ENCODE measurements at regions of chr17 and their contacts with region 1.

Region 1: DNA sequence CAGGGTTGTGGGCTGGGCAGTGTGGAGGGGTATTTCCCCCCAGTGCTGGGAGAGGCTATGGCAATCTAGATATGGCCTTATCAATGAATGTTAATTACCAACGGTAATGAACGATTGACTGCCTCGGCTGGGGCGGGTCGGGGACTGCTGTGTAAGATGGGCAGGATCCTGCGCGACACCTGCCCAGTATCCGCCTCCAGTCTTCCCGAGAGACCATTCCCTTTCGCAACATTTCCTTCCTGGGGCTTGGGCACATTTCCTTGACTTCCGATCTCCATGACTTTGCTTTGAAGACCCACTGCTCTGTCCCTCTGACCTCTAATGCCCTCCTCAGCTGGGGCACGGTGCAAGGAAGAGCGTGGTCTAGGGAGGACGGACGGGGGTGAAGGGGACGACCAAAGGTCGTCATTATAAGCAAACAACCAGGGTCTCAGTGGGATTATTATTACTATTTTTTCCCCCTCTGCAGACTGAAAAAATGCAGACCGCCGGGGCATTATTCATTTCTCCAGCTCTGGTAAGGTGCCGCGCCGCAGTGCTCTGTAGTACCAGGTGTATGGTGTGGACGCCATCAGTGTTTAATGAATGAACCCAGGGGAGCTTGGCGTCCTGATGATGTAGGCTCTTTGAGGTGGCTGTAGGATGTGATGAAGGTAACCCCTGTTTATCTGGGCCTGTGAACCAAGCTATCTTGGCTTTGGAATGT is 506 bp downstream of the ATP5MC1 start:
- DNase-seq: no peak
- ATAC-seq: peak; percentile 12
- H3K4me3 ChIP-seq: peak overlapping the region; percentile 76 to 97 (median 81)
- H3K27ac ChIP-seq: peak overlapping the region; percentile 84
- H3K4me1 ChIP-seq: peaks cover 52% of the 10 kb centered on the region
- H3K27me3 ChIP-seq: no peaks in the 10 kb centered on the region; a peak in 1 of 5 replicates
- CTCF ChIP-seq: 0 out of 2 replicates have a peak, but pooled peaks have one; percentile 2
- EP300 ChIP-seq: no peak
- POLR2A ChIP-seq: peak in 1 of 2 experiments; percentile 0; a peak in 1 of 4 replicates
- RAD21 ChIP-seq: peak; percentile 69

Region 2: GRCh38 chr17:48871551-48872351 is 21.3 kb before region 1 on chr17:
- CTCF ChIA-PET with region 1: no interaction called
- POLR2A ChIA-PET with region 1: interaction called, 34 read pairs
- in situ Hi-C with region 1: no loop called
- intact Hi-C with region 1: no loop called
- DNase-seq: peak; percentile 99
- ATAC-seq: peak; percentile 96
- H3K4me3 ChIP-seq: peak overlapping the region; percentile 17 to 60 (median 25); a peak in 4 of 6 replicates
- H3K27ac ChIP-seq: peak overlapping the region; percentile 97
- H3K4me1 ChIP-seq: peaks cover 64% of the 10 kb centered on the region
- H3K27me3 ChIP-seq: no peaks in the 10 kb centered on the region
- CTCF ChIP-seq: peak; percentile 45; the same call in 1 of the 2 replicates
- EP300 ChIP-seq: peak; percentile 98
- POLR2A ChIP-seq: peak; percentile 56 to 74
- RAD21 ChIP-seq: peak; percentile 45; the same call in 1 of the 2 replicates

Region 3: GRCh38 chr17:48908047-48908843 is 15.2 kb after region 1 on chr17 and contains the start of gene UBE2Z:
- CTCF ChIA-PET with region 1: no interaction called
- POLR2A ChIA-PET with region 1: interaction called, 194 read pairs
- in situ Hi-C with region 1: no loop called
- intact Hi-C with region 1: loop called (anchors 1 kb)
- DNase-seq: peak; percentile 95
- ATAC-seq: peak; percentile 92
- H3K4me3 ChIP-seq: peak within 1 kb of the TSS; percentile 82 to 97 (median 94)
- H3K27ac ChIP-seq: peak within 1 kb of the TSS; percentile 91
- H3K4me1 ChIP-seq: peaks cover 69% of the 10 kb centered on the region
- H3K27me3 ChIP-seq: no peaks in the 10 kb centered on the region; a peak in 1 of 5 replicates
- CTCF ChIP-seq: peak; percentile 80
- EP300 ChIP-seq: 0 out of 4 replicates have a peak, but pooled peaks of 1 of the 2 experiments have one; percentile 43
- POLR2A ChIP-seq: peak; percentile 90 to 92
- RAD21 ChIP-seq: peak; percentile 49; the same call in 1 of the 2 replicates
- total RNA-seq, gene UBE2Z: 63.2 and 72.7 TPM in 2 replicates

Region 4: GRCh38 chr17:48944519-48945260 is 51.6 kb after region 1 on chr17 and contains the start of gene SNF8:
- CTCF ChIA-PET with region 1: no interaction called
- POLR2A ChIA-PET with region 1: interaction called, 33 read pairs
- in situ Hi-C with region 1: no loop called
- intact Hi-C with region 1: no loop called
- DNase-seq: peak; percentile 90
- ATAC-seq: peak; percentile 97
- H3K4me3 ChIP-seq: peak within 1 kb of the TSS; percentile 75 to 91 (median 90)
- H3K27ac ChIP-seq: peak within 1 kb of the TSS; percentile 86
- H3K4me1 ChIP-seq: peaks cover 27% of the 10 kb centered on the region
- H3K27me3 ChIP-seq: no peaks in the 10 kb centered on the region; a peak in 1 of 5 replicates
- CTCF ChIP-seq: peak; percentile 35; the same call in 1 of the 2 replicates
- EP300 ChIP-seq: no peak; a peak in 1 of 4 replicates
- POLR2A ChIP-seq: peak; percentile 91 to 92
- RAD21 ChIP-seq: peak; percentile 71; the same call in 1 of the 2 replicates
- total RNA-seq, gene SNF8: 152 and 153 TPM in 2 replicates

Region 5: GRCh38 chr17:48997083-48997826 is 104.2 kb after region 1 on chr17 and contains the start of gene IGF2BP1:
- CTCF ChIA-PET with region 1: no interaction called
- POLR2A ChIA-PET with region 1: interaction called, 59 read pairs
- in situ Hi-C with region 1: no loop called
- intact Hi-C with region 1: no loop called
- DNase-seq: peak; percentile 81
- ATAC-seq: peak; percentile 39
- H3K4me3 ChIP-seq: peak within 1 kb of the TSS; percentile 87 to 97 (median 90)
- H3K27ac ChIP-seq: peak within 1 kb of the TSS; percentile 95
- H3K4me1 ChIP-seq: peaks cover 24% of the 10 kb centered on the region
- H3K27me3 ChIP-seq: peaks cover 0 to 3% of the 10 kb centered on the region in 2 experiments; a peak in 1 of 5 replicates
- CTCF ChIP-seq: 0 out of 2 replicates have a peak, but pooled peaks have one; percentile 2
- EP300 ChIP-seq: peak in 1 of 2 experiments; percentile 5; a peak in 1 of 4 replicates
- POLR2A ChIP-seq: peak; percentile 57 to 70
- RAD21 ChIP-seq: peak; percentile 26
- total RNA-seq, gene IGF2BP1: 75.1 and 116 TPM in 2 replicates

Region 6: GRCh38 chr17:49079840-49080663 is 187.0 kb after region 1 on chr17:
- CTCF ChIA-PET with region 1: no interaction called
- POLR2A ChIA-PET with region 1: no interaction called
- in situ Hi-C with region 1: no loop called
- intact Hi-C with region 1: no loop called
- DNase-seq: peak; percentile 87
- ATAC-seq: peak; percentile 91
- H3K4me3 ChIP-seq: peak overlapping the region in 2 of 3 experiments; percentile 16 to 50; a peak in 2 of 6 replicates
- H3K27ac ChIP-seq: peak overlapping the region; percentile 90
- H3K4me1 ChIP-seq: peaks cover 39% of the 10 kb centered on the region
- H3K27me3 ChIP-seq: no peaks in the 10 kb centered on the region
- CTCF ChIP-seq: no peak
- EP300 ChIP-seq: peak in 1 of 2 experiments; percentile 32; a peak in 1 of 4 replicates
- POLR2A ChIP-seq: peak in 1 of 2 experiments; percentile 51; a peak in 1 of 4 replicates
- RAD21 ChIP-seq: 0 out of 2 replicates have a peak, but pooled peaks have one; percentile 11

Region 7: GRCh38 chr17:49191917-49192741 is 299.0 kb after region 1 on chr17:
- CTCF ChIA-PET with region 1: no interaction called
- POLR2A ChIA-PET with region 1: interaction called, 3 read pairs
- in situ Hi-C with region 1: no loop called
- intact Hi-C with region 1: loop called (anchors 2 kb)
- DNase-seq: peak; percentile 90
- ATAC-seq: peak; percentile 71
- H3K4me3 ChIP-seq: peak overlapping the region; percentile 75 to 80 (median 76)
- H3K27ac ChIP-seq: peak overlapping the region; percentile 88
- H3K4me1 ChIP-seq: peaks cover 18% of the 10 kb centered on the region
- H3K27me3 ChIP-seq: peaks cover 0 to 2% of the 10 kb centered on the region in 2 experiments; a peak in 1 of 5 replicates
- CTCF ChIP-seq: peak; percentile 83
- EP300 ChIP-seq: peak in 1 of 2 experiments; percentile 28; a peak in 1 of 4 replicates
- POLR2A ChIP-seq: peak in 1 of 2 experiments; percentile 57; a peak in 3 of 4 replicates
- RAD21 ChIP-seq: no peak; the same call in none of the 2 replicates

Measured in HepG2 (cell line).